Heart right ventricle (tissue), 16 donors: ENCODE measurements at regions of chr2 and their contacts with region 1.

Region 1: GRCh38 chr2:55809875-55810621 is 113.5 kb downstream of the EFEMP1 start:
- DNase-seq: peak; percentile 25 to 32
- ATAC-seq: peak in 7 of 8 donors; percentile 56 to 89 (median 81)
- H3K4me3 ChIP-seq: no peak overlapping the region
- H3K27ac ChIP-seq: peak overlapping the region in 3 of 10 donors; percentile 14 to 87 (median 30)
- H3K4me1 ChIP-seq: peaks cover 0 to 20% (median 5%) of the 10 kb centered on the region in 9 donors
- H3K27me3 ChIP-seq: no peaks in the 10 kb centered on the region
- CTCF ChIP-seq: no peak

Region 2: GRCh38 chr2:55500025-55500424 is 310.0 kb before region 1 on chr2:
- intact Hi-C with region 1: no loop called
- DNase-seq: no peak
- ATAC-seq: no peak
- H3K4me3 ChIP-seq: no peak overlapping the region
- H3K27ac ChIP-seq: no peak overlapping the region
- H3K4me1 ChIP-seq: no peaks in the 10 kb centered on the region
- H3K27me3 ChIP-seq: no peaks in the 10 kb centered on the region
- CTCF ChIP-seq: no peak

Region 3: GRCh38 chr2:55844986-55845385 is 34.9 kb after region 1 on chr2:
- intact Hi-C with region 1: loop called in 1 of 10 experiments (anchors 1 kb)
- DNase-seq: no peak
- ATAC-seq: peak in 1 of 8 donors; percentile 31
- H3K4me3 ChIP-seq: no peak overlapping the region
- H3K27ac ChIP-seq: peak overlapping the region in 1 of 10 donors; percentile 38
- H3K4me1 ChIP-seq: peaks cover 0 to 15% (median 0%) of the 10 kb centered on the region in 9 donors
- H3K27me3 ChIP-seq: no peaks in the 10 kb centered on the region
- CTCF ChIP-seq: no peak

Region 4: DNA sequence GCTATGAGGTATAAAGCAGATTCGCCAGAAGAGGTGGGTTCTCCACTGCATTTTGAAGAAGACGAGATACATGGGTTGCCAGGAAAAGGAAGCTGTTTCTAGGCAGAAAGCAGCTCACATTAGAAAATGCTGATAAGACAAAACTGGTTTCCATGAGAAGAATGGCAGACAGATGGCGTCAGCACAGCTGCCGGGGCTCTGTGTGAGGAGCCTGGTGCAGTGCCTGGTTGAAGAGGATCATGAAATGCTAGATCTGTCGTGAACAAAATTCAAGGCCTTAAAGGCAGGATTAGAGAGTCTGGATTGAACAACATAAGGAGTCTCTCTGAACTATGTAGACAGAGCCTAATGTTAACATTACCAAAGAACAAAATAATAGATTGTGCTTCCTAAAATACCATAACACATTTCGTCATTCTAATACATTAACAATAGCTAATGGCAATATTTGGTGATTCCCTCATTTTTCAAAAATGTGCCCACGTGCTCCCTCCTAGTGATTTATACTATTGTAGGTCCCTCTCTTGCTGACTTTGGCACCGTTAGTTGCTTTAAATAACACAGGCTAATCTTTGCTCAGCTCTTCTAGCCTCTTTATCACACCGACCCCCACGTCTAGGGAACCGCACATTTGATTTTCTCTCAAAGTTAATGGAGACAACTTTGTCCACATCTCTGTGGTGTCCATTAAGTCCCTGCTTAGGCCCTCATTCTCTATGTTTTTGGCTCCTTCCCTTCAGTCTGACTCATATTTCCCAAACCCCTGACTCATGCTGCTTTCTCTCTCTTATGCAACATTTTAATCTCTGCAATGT is 75.3 kb after region 1 on chr2:
- intact Hi-C with region 1: loop called in 1 of 10 experiments (anchors 5 kb)
- DNase-seq: peak in 1 of 2 donors; percentile 34
- ATAC-seq: peak; percentile 78 to 89 (median 84)
- H3K4me3 ChIP-seq: no peak overlapping the region
- H3K27ac ChIP-seq: peak overlapping the region in 9 of 10 donors; percentile 44 to 84 (median 71)
- H3K4me1 ChIP-seq: peaks cover 0 to 71% (median 28%) of the 10 kb centered on the region in 9 donors
- H3K27me3 ChIP-seq: no peaks in the 10 kb centered on the region
- CTCF ChIP-seq: no peak